ENCODE measurements at regions of chr5 and their contacts with region 1.

Region 1: GRCh38 chr5:153974131-153974812 is 64.4 kb downstream of the FAM114A2 start:
- DNase-seq: peak; percentile 6
- H3K4me3 ChIP-seq: no peak overlapping the region
- H3K27ac ChIP-seq: no peak overlapping the region
- H3K27me3 ChIP-seq: peaks cover 20% of the 10 kb centered on the region
- CTCF ChIP-seq: peak; percentile 76

Region 2: DNA sequence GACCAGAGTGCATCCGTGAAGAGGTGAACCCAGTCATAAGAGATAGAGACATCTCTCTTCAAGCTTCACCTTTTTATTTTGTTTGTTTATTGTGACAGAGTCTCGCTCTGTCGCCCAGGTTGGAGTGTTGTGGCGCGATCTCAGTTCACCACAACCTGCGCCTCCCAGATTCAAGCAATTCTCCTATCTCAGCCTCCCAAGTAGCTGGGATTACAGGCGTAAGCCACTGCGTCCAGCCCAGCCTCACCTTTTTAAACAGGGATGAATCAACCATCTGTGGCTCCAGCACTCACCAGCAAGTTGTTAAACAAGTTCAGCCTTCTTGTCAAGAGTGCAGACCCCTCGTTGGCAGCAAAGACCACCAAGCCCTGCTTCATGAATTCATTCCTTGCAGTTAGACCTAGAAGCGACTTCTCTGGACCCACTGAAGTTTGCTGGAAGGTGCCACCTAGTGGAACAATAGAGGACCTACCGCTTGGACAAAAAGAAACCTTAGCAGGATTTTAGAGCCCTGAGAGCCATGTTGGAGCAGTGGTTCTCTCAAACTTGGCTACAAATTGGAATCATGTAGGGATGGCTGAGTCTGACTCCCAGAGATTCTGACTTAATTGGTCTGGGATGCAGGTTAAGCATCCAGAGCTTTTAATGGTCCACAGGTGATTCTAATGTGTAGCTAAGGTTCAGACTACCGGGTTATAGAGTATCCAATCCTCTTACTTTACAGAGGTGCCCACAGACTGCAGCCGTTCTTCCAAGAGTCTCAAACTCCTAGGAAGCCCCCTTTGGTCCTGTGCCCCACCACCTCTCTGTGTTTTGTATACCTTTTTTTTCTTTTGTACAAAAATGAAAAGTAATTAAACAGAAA is 205.8 kb after region 1 on chr5:
- CTCF ChIA-PET with region 1: interaction called, 18 read pairs
- POLR2A ChIA-PET with region 1: no interaction called
- DNase-seq: peak; percentile 33
- H3K4me3 ChIP-seq: no peak overlapping the region
- H3K27ac ChIP-seq: no peak overlapping the region
- H3K27me3 ChIP-seq: peaks cover 9% of the 10 kb centered on the region
- CTCF ChIP-seq: peak; percentile 93

Region 3: DNA sequence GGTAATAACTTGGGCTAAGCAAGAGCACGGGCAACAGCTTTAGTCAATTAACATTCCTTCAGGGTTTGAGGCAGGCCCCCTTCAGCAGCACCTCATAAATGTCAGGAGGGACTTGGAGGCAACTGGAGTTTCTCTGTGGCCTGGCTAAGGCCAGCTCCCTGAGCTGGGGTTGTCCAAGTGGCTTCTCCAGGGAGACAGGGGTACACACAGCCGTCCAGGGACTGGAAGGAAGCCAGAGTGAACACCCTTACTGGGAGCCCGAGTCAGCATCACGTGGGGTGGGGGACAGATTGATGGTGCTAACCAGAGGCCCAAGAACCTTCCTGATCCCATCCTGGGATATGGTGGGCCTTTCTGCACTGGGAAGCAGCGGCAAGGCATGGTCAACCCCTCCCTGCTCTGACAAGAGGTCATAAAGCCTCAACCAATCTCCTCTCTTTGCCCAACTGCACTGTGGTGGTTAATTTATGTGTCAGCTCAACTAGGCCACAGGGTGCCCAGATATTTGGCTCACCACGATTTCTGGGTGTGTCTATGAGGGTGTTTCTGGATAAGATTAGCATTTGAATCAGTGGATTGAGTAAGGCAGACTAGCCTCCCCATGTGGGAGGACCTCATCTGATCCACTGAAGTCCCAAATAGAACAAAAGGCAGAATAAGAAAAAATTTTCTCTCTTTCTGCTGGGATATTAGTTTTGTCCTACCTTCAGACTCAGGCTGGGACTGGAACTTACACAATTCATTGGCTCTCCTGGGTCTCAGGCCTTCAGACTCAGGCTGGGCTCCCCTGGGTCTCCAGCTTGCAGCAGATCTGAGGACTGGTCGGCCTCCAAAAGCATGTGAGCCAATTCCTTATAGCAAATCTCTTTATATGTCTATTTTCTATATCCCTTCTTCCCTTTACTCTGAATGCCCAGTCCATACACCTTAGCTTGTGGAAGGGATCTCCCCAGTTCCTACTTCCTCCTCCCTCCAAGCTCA is 653.7 kb after region 1 on chr5:
- CTCF ChIA-PET with region 1: interaction called, 10 read pairs
- POLR2A ChIA-PET with region 1: no interaction called
- DNase-seq: no peak
- H3K4me3 ChIP-seq: no peak overlapping the region
- H3K27ac ChIP-seq: no peak overlapping the region
- H3K27me3 ChIP-seq: peaks cover 8% of the 10 kb centered on the region
- CTCF ChIP-seq: no peak